ENCODE measurements at regions of chr17 and their contacts with region 1.

Region 1: DNA sequence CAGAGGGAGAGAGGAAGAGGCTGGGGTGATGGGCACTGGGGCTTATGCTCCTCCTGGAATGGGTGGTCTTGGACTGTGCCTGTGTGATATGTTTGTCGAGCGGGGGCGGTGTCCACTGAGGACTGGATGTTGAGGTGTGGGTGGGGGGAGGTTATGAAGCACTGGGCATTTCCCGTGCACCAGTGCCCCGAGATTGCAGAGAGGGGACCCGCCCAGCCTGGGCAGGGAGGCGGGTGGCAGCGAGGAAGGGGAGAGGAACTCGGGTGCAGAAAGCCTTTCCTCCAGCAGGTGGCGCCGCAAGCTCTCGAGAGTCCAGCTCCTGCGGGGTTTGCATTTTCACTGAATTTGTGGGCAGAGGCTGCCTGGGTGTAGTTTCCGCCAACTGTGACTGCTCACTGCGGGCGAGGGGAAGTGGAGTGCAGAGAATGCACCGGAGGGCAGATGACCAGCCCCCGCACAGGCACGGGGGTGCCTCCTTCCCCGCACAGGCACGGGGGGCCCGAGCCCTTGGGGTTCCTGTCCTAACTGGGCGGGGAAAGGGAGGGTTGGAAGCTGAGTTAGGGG is 190.6 kb downstream of the SEC14L1 start:
- DNase-seq: peak; percentile 98
- H3K4me3 ChIP-seq: peak overlapping the region in 1 of 2 experiments; percentile 27; a peak in 1 of 4 replicates
- H3K27ac ChIP-seq: peak overlapping the region; percentile 50 to 70
- H3K4me1 ChIP-seq: peaks cover 0 to 14% of the 10 kb centered on the region in 2 experiments; a peak in 1 of 4 replicates
- H3K27me3 ChIP-seq: no peaks in the 10 kb centered on the region
- CTCF ChIP-seq: peak; percentile 98
- EP300 ChIP-seq: peak in 1 of 2 experiments; percentile 15; a peak in 2 of 4 replicates
- RAD21 ChIP-seq: peak; percentile 100

Region 2: DNA sequence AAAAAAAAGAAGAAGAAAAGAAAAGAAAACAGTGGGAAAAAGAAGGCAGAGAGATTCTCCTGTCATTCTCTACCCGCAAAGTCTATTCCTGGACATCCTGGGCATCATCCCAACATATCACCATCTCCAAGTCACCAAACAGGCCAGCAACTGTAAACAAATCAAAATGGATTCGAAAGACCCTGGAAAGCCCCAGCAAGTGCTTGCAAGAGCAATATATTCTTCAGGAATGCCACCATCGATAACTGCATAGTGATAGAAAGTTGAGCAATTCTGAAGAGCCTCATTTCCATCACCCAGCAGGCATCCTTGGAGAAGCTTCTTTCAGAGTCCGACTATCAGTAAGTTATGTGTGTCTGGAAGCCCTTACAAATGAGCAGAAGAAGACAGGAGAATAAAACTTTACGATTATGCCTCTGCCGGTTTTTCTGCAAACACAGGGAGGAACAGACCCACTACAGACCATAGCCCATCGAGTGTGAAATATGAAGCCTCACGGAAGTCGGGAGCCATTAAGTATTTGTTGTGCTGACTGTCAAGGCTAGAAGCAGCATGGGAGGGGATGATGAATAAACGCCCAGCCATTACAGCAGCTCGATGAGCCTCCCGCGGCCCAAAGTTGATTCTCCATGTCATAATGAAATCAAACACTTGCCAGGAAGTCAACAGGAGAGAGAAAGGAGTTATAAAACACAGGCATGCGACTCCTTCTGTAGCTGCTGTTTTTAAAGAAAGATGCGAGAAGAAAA is 255.1 kb before region 1 on chr17:
- CTCF ChIA-PET with region 1: no interaction called
- POLR2A ChIA-PET with region 1: no interaction called
- DNase-seq: no peak
- H3K4me3 ChIP-seq: no peak overlapping the region
- H3K27ac ChIP-seq: no peak overlapping the region
- H3K4me1 ChIP-seq: no peaks in the 10 kb centered on the region; a peak in 1 of 4 replicates
- H3K27me3 ChIP-seq: peaks cover 29% of the 10 kb centered on the region
- CTCF ChIP-seq: no peak
- EP300 ChIP-seq: no peak
- RAD21 ChIP-seq: no peak

Region 3: GRCh38 chr17:77240976-77241375 is 90.4 kb before region 1 on chr17:
- CTCF ChIA-PET with region 1: no interaction called
- POLR2A ChIA-PET with region 1: no interaction called
- DNase-seq: no peak
- H3K4me3 ChIP-seq: no peak overlapping the region
- H3K27ac ChIP-seq: no peak overlapping the region
- H3K4me1 ChIP-seq: peaks cover 1 to 3% of the 10 kb centered on the region in 2 experiments; a peak in 2 of 4 replicates
- H3K27me3 ChIP-seq: no peaks in the 10 kb centered on the region
- CTCF ChIP-seq: no peak
- EP300 ChIP-seq: no peak
- RAD21 ChIP-seq: no peak

Region 4: DNA sequence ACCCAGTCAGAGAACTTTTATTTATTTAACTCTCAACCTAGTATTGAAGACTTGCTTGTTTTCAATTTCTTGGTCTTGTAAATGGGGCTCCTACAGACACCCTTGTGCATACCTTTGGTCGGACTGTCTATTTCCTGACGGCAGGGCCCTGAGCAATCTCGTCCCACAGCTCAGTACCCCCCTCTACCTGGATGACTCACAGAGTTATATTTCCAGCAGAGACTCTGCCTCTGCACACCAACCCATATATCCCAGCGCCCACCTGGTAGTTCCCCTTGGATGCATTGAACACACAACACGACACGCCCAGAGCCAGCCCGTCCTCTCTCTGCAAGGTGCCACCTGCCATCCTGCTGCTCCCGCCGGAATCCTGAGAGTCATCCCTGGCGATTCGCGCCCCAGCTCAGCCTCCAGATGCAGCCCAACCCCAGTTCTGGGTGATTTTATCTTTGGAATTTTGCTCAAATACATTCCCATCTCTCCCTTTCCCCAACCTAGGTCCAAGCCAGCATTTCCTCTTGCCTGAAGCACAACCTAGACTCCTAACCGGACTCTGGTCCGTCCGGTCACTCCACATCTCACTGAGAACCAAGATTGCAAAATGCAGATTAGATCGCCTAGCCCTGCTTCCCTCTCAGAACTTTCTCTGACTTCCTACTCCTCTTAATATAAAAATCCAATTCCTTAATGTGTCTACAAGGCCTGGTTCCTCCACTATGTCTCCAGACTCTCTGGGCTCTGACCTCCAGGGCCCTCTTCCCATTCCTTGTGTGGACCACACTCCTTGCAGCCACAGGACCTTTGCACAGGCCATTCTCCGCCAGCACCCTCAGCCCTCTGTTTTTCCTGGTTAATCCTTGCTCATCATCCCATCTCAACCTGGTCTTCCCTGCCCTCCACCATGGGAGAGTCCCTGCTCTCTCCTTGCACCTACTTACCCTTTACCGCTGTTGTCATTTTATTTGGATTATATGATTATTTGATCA is 61.4 kb before region 1 on chr17:
- CTCF ChIA-PET with region 1: no interaction called
- POLR2A ChIA-PET with region 1: no interaction called
- DNase-seq: no peak
- H3K4me3 ChIP-seq: no peak overlapping the region
- H3K27ac ChIP-seq: no peak overlapping the region
- H3K4me1 ChIP-seq: peaks cover 0 to 6% of the 10 kb centered on the region in 2 experiments; a peak in 1 of 4 replicates
- H3K27me3 ChIP-seq: no peaks in the 10 kb centered on the region
- CTCF ChIP-seq: no peak
- EP300 ChIP-seq: no peak
- RAD21 ChIP-seq: no peak

Region 5: DNA sequence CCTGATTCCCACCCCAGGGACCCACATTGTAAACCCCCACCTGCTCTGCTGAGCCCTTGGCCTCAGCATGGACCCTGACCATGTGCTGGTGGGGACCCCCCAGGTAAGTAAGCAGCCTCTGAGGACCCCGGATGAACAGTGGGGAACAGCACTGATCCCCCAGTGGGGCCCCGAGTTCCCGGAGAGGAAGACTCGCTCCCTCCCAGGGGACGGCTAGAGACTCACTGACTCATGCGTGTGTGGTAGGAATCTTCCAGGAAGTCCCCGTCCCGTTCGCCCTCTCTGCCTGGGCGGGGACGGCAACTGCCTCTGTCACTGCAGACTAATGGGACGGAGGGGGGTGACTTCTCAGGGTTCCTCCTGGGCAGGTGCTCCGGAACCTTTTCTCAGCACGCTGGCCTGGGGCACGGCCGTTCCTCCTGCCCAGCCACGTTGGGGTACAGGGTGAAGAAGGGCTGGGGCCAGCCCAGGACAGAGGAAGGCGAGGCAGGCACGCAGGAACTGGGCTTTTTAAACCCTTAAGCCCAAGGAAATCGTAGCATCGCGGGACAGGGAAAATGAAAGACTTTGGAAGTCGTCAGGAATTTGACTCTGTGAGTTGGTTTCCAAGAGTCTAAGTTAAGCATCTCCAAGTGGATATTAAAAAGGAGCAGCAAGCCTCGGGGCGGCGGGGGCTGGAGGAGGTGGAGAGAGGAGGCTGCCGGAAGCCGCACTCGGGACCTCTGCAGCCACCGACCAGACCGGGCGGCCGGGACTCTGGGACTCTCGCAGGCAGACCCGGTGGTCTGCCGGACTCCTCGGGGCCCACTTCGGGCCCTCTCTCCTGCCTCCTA is 12.0 kb before region 1 on chr17:
- CTCF ChIA-PET with region 1: interaction called, 24 read pairs
- POLR2A ChIA-PET with region 1: no interaction called
- DNase-seq: peak; percentile 43
- H3K4me3 ChIP-seq: peak overlapping the region; percentile 12 to 53; a peak in 3 of 4 replicates
- H3K27ac ChIP-seq: peak overlapping the region; percentile 48 to 81
- H3K4me1 ChIP-seq: peaks cover 72 to 74% of the 10 kb centered on the region in 2 experiments
- H3K27me3 ChIP-seq: no peaks in the 10 kb centered on the region
- CTCF ChIP-seq: no peak
- EP300 ChIP-seq: peak in 1 of 2 experiments; percentile 58; a peak in 1 of 4 replicates
- RAD21 ChIP-seq: no peak

Region 6: GRCh38 chr17:77365584-77366186 is 34.3 kb after region 1 on chr17:
- CTCF ChIA-PET with region 1: interaction called, 127 read pairs
- POLR2A ChIA-PET with region 1: no interaction called
- DNase-seq: peak; percentile 48
- H3K4me3 ChIP-seq: no peak overlapping the region; a peak in 1 of 4 replicates
- H3K27ac ChIP-seq: peak overlapping the region; percentile 80 to 97
- H3K4me1 ChIP-seq: peaks cover 47 to 67% of the 10 kb centered on the region in 2 experiments
- H3K27me3 ChIP-seq: no peaks in the 10 kb centered on the region
- CTCF ChIP-seq: no peak
- EP300 ChIP-seq: 0 out of 4 replicates have a peak, but pooled peaks of 1 of the 2 experiments have one; percentile 4
- RAD21 ChIP-seq: no peak

Region 7: DNA sequence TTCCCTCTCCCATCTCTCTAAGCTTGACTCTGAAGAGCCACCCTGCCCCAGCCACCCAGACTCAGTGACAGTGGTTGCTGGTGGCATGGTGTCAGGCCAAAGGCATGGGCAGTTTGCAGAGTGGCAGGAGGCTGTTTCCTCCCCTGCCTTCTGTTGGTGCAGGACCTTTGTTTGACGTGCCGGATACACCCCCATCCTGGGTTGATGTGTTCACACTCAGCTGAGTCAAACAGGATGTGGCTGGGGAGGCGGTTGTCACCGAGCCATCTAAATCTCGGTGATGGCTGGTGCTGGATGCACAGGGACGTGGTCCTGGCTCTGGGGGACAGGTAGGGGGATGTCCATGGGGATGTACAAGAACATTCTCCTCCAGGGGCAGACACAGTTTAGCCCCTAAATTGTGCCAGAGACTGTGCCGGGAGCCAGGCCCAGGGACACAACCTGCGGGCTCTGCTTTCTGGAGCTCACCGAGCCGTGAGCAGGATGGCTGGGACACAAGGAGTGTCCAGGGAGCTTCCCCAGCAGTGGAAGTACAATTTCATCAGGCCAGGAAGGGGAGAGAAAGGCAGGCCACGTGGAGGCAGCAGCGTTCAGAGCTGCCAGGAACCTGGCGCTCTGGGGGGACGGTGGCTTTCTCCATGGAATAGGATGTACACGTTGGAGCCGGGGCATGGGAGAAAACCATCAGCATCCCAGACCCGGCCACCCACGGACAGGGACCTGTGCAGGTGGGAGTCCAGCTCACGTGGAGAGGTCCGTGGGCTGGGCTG is 73.6 kb after region 1 on chr17:
- CTCF ChIA-PET with region 1: interaction called, 85 read pairs
- POLR2A ChIA-PET with region 1: interaction called, 3 read pairs
- DNase-seq: no peak
- H3K4me3 ChIP-seq: no peak overlapping the region
- H3K27ac ChIP-seq: peak overlapping the region in 1 of 2 experiments; percentile 55; a peak in 2 of 4 replicates
- H3K4me1 ChIP-seq: peaks cover 27 to 40% of the 10 kb centered on the region in 2 experiments; a peak in 3 of 4 replicates
- H3K27me3 ChIP-seq: no peaks in the 10 kb centered on the region
- CTCF ChIP-seq: no peak
- EP300 ChIP-seq: no peak; a peak in 1 of 4 replicates
- RAD21 ChIP-seq: no peak

Region 8: DNA sequence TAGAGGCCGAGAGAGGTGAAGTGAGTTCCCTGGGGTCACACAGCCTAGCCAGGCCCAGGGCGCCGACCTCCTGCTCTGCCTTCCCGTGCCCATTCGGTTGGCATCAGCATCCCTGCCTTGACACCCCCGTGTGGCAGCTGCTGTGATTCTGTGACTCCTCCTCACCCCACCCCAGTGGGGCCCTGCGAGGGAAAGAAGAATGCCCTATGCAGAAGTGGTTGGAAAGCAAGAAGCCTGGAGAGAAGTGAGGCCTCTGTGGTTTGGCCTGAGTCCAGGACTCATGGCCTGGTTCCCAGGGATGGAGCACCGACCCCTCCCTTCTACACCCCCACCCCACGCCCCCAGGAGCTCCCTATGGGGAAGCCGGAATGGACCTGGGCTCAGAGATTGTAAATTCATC is 105.6 kb after region 1 on chr17:
- CTCF ChIA-PET with region 1: interaction called, 205 read pairs
- POLR2A ChIA-PET with region 1: no interaction called
- DNase-seq: peak; percentile 71
- H3K4me3 ChIP-seq: no peak overlapping the region
- H3K27ac ChIP-seq: peak overlapping the region in 1 of 2 experiments; percentile 98; a peak in 3 of 4 replicates
- H3K4me1 ChIP-seq: peaks cover 70 to 91% of the 10 kb centered on the region in 2 experiments
- H3K27me3 ChIP-seq: no peaks in the 10 kb centered on the region
- CTCF ChIP-seq: 0 out of 2 replicates have a peak, but pooled peaks have one; percentile 15
- EP300 ChIP-seq: peak; percentile 18 to 46; a peak in 2 of 4 replicates
- RAD21 ChIP-seq: no peak

Region 9: DNA sequence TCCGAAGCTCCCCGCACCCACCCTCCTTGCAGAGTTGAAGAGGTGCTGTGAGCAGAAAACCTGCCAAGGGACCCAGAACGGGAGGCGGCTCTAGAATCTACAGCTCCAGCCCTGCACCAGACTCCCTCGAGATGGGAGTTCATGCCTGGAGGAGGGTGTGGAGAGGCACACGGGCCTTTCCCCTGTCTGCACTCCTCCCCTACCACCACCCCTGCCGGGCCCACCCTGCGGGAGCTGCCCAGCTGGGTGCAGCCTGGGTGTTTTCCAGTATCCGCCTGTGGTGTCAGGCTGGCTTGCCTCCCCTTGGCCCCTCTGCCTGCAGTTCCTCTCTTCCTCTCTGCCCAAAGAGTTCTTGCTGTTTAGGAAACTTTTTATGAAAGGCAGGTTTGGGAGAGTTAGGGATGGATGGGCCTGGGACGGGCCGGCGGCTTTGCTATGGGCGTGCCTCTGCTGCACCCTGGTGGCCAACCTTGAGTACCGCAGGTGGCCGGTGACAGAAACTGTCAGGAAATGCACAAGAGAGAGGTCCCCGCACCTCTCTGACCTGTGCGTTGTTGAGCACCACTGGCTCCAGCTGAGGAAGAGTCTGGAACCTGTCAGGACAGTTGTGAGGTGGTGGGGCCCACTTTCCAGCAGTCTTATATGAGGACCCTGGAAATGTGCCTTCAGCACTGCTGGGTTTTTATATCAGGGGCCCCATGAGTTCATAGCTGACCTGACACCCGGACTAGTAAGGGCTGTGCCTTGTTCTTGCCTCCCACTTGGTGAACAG is 163.5 kb after region 1 on chr17:
- CTCF ChIA-PET with region 1: interaction called, 100 read pairs
- POLR2A ChIA-PET with region 1: no interaction called
- DNase-seq: peak; percentile 96
- H3K4me3 ChIP-seq: no peak overlapping the region; a peak in 1 of 4 replicates
- H3K27ac ChIP-seq: peak overlapping the region; percentile 18 to 29; a peak in 2 of 4 replicates
- H3K4me1 ChIP-seq: peaks cover 4% of the 10 kb centered on the region in 2 experiments; a peak in 2 of 4 replicates
- H3K27me3 ChIP-seq: no peaks in the 10 kb centered on the region
- CTCF ChIP-seq: peak; percentile 100
- EP300 ChIP-seq: no peak
- RAD21 ChIP-seq: peak; percentile 100

Measured in SK-N-SH (cell line).